T-cell (primary cell): ENCODE measurements at regions of chr3 and their contacts with region 1.

Region 1: GRCh38 chr3:128133273-128134084 is 9.9 kb upstream of the RUVBL1 start:
- DNase-seq: peak in 26 of 35 experiments; percentile 14 to 72 (median 37)
- ATAC-seq: peak; percentile 37 to 71 (median 66)
- H3K4me3 ChIP-seq: no peak overlapping the region
- H3K4me3 Mint-ChIP-seq: no peak overlapping the region
- H3K27ac ChIP-seq: no peak overlapping the region
- H3K27ac Mint-ChIP-seq: no peak overlapping the region
- H3K4me1 ChIP-seq: no peaks in the 10 kb centered on the region
- H3K4me1 Mint-ChIP-seq: no peaks in the 10 kb centered on the region
- H3K27me3 ChIP-seq: peaks cover 0 to 9% of the 10 kb centered on the region in 2 experiments
- H3K27me3 Mint-ChIP-seq: peaks cover 3 to 8% of the 10 kb centered on the region in 2 donors

Region 2: DNA sequence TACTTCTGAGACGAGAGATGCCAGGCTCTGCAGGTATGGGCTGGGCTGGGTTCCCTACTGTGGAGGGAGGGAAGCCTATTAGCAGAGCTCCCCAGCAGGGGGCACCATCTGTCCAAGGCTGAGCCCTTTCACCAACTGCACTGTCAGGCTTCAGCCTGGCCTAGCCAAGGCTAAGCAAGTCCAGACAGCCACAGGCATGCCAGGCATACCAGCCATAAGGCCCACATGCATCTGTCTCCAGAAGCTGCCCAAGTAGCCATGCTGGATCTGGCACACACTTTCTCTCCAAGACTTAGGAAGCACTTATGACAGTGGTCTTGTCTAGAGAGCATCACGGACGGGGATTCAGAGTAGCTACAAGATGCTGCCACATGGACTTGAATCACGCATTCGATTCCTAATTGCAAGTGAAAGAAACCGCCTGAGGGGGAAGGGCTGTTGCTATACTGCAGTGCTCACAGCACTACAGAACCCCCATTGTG is 38.2 kb before region 1 on chr3:
- CTCF ChIA-PET with region 1: interaction called, 25 to 53 read pairs
- POLR2A ChIA-PET with region 1: interaction called in 1 of 2 experiments, 3 read pairs
- DNase-seq: peak; percentile 52 to 86 (median 77)
- ATAC-seq: peak; percentile 85 to 99 (median 97)
- H3K4me3 ChIP-seq: no peak overlapping the region
- H3K4me3 Mint-ChIP-seq: no peak overlapping the region
- H3K27ac ChIP-seq: no peak overlapping the region
- H3K27ac Mint-ChIP-seq: no peak overlapping the region
- H3K4me1 ChIP-seq: peaks cover 3 to 13% of the 10 kb centered on the region in 2 experiments
- H3K4me1 Mint-ChIP-seq: peaks cover 5 to 10% (median 7%) of the 10 kb centered on the region in 3 donors
- H3K27me3 ChIP-seq: no peaks in the 10 kb centered on the region
- H3K27me3 Mint-ChIP-seq: no peaks in the 10 kb centered on the region

Region 3: GRCh38 chr3:128153156-128154041 is 19.9 kb after region 1 on chr3 and contains the start of gene EEFSEC:
- CTCF ChIA-PET with region 1: interaction called in 1 of 2 experiments, 10 read pairs
- POLR2A ChIA-PET with region 1: no interaction called
- DNase-seq: peak; percentile 53 to 89 (median 76)
- ATAC-seq: peak; percentile 91 to 97 (median 94)
- H3K4me3 ChIP-seq: peak within 1 kb of the TSS; percentile 66 to 83
- H3K4me3 Mint-ChIP-seq: peak within 1 kb of the TSS; percentile 84 to 94 (median 92)
- H3K27ac ChIP-seq: peak within 1 kb of the TSS; percentile 78
- H3K27ac Mint-ChIP-seq: peak within 1 kb of the TSS; percentile 95 to 97
- H3K4me1 ChIP-seq: peaks cover 7 to 22% of the 10 kb centered on the region in 2 experiments
- H3K4me1 Mint-ChIP-seq: peaks cover 33 to 46% (median 43%) of the 10 kb centered on the region in 3 donors
- H3K27me3 ChIP-seq: no peaks in the 10 kb centered on the region
- H3K27me3 Mint-ChIP-seq: no peaks in the 10 kb centered on the region
- total RNA-seq, gene EEFSEC: 15.9 to 21.1 (median 19.1) TPM